ENCODE measurements at regions of chr5 and their contacts with region 1.

Region 1: GRCh38 chr5:32709781-32710549 is 1.2 kb upstream of the NPR3 start:
- DNase-seq: peak; percentile 79
- H3K4me3 ChIP-seq: peak overlapping the region; percentile 38 to 85 (median 60)
- H3K27ac ChIP-seq: peak overlapping the region in 7 of 8 donors; percentile 33 to 79 (median 68)
- H3K4me1 ChIP-seq: peaks cover 15 to 65% (median 51%) of the 10 kb centered on the region in 6 donors
- H3K27me3 ChIP-seq: peaks cover 0 to 78% (median 33%) of the 10 kb centered on the region in 7 donors
- CTCF ChIP-seq: peak in 10 of 11 experiments; percentile 8 to 74 (median 55)
- POLR2A ChIP-seq: no peak

Region 2: GRCh38 chr5:32153723-32154122 is 556.2 kb before region 1 on chr5:
- intact Hi-C with region 1: no loop called
- DNase-seq: no peak
- H3K4me3 ChIP-seq: no peak overlapping the region
- H3K27ac ChIP-seq: no peak overlapping the region
- H3K4me1 ChIP-seq: peaks cover 19 to 96% (median 58%) of the 10 kb centered on the region in 6 donors
- H3K27me3 ChIP-seq: no peaks in the 10 kb centered on the region
- CTCF ChIP-seq: no peak
- POLR2A ChIP-seq: no peak

Region 3: DNA sequence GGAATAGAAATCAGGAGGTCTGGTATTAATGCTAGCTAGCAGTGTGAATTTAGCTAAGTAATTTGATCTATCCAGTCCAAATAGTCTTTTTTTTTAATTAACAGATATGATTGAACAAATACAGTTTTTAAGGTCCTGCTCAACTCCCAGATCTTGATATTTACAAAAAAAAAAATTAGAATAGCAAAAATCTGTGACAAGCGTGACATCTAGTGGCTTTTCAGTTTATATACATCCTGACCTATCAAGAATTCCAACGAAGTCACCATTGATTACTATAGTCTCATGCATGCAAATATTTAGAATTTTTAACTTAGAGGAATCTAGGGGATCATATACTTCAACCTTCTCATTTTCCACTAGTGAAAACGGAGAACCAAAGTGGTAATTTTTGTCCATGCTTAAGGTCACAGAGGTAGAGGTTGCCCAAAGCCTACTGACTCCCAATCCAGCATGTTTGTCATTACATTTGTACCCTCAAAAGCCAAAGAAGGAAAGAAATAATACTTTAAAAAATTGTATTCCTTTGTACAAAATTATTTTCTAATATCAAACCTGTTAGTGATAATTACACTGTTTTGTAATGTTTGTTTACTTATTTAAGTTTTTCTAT is 713.2 kb after region 1 on chr5:
- intact Hi-C with region 1: loop called (anchors 5 kb)
- DNase-seq: no peak
- H3K4me3 ChIP-seq: no peak overlapping the region
- H3K27ac ChIP-seq: no peak overlapping the region
- H3K4me1 ChIP-seq: peaks cover 0 to 3% (median 0%) of the 10 kb centered on the region in 6 donors
- H3K27me3 ChIP-seq: peaks cover 0 to 8% (median 0%) of the 10 kb centered on the region in 7 donors
- CTCF ChIP-seq: peak in 7 of 11 experiments; percentile 18 to 48 (median 39)
- POLR2A ChIP-seq: no peak